ENCODE measurements at regions of chr5 and their contacts with region 1.

Region 1: GRCh38 chr5:157354800-157355199 is 88.9 kb downstream of the CYFIP2 start:
- DNase-seq: no peak
- H3K4me3 Mint-ChIP-seq: no peak overlapping the region
- H3K27ac Mint-ChIP-seq: no peak overlapping the region
- H3K4me1 Mint-ChIP-seq: peaks cover 53% of the 10 kb centered on the region
- H3K27me3 Mint-ChIP-seq: no peaks in the 10 kb centered on the region

Region 2: DNA sequence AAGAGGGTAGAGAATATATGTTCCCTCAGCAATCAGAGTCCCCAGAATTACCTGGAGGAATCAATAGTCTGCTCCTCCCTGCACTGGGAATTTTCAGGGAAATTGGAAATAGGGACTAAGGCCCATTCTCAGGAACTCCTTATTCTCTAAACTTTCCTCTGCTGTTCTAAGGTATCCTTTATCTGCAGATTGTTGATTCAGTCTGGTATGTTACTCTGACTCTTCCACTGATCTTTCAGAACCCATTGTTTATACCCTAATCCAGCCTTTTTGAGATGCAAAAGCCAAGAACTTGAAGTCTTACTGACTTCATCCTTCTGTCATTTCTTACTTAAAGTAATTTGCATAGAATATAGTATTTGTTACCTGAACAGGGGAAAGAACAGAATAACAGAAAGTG is 648.2 kb before region 1 on chr5:
- CTCF ChIA-PET with region 1: no interaction called
- POLR2A ChIA-PET with region 1: no interaction called
- intact Hi-C with region 1: no loop called
- DNase-seq: no peak
- H3K4me3 Mint-ChIP-seq: no peak overlapping the region
- H3K27ac Mint-ChIP-seq: no peak overlapping the region
- H3K4me1 Mint-ChIP-seq: no peaks in the 10 kb centered on the region
- H3K27me3 Mint-ChIP-seq: peaks cover 2% of the 10 kb centered on the region

Region 3: DNA sequence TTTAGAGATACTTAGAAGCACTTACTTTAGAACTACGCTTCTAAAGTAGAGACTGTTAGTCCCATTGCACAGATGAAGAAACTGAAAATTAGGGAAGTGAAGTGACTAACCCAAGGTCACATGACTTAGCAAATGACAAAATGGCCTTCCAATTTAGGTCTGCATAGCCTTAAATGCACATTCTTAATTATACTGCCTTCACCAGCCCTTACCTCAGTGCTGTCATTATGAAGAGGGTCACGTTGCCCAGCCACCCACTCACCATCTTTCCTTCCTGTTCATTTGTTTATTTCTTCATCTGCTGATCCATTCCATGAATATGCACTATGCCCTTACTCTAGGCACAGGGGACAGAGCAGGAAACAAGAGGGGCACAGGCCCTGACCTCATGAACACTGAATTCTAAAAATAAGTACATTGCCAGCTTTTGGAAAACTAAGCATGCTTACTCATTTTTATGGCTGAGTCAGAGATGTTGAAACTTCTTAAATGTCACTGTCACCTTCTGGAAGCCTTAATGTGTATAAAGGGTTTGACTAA is 254.6 kb before region 1 on chr5:
- CTCF ChIA-PET with region 1: no interaction called
- POLR2A ChIA-PET with region 1: no interaction called
- intact Hi-C with region 1: loop called (anchors 2 kb)
- DNase-seq: peak; percentile 69
- H3K4me3 Mint-ChIP-seq: peak overlapping the region; percentile 27
- H3K27ac Mint-ChIP-seq: peak overlapping the region; percentile 96
- H3K4me1 Mint-ChIP-seq: peaks cover 20% of the 10 kb centered on the region
- H3K27me3 Mint-ChIP-seq: no peaks in the 10 kb centered on the region

Region 4: DNA sequence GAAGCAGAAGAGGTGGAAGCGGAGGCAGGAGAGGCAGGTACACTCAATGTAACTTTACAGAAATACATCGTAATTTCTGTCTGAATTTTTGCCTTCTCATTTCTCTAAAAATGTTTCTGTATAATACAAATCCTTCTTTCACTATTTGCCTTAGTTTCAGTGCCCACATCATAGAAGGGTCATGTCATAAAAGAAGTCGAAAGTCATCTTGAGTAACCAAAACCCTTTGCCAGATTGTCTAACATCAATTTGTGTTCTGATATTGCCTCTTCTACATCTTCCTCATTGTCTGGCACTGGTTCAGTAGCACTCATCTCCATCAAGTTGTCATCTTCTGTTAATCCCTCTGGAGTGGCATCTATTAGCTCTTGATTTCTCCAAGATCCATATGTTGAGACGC is 95.1 kb before region 1 on chr5:
- CTCF ChIA-PET with region 1: no interaction called
- POLR2A ChIA-PET with region 1: no interaction called
- intact Hi-C with region 1: loop called (anchors 2 kb)
- DNase-seq: no peak
- H3K4me3 Mint-ChIP-seq: no peak overlapping the region
- H3K27ac Mint-ChIP-seq: no peak overlapping the region
- H3K4me1 Mint-ChIP-seq: peaks cover 76% of the 10 kb centered on the region
- H3K27me3 Mint-ChIP-seq: no peaks in the 10 kb centered on the region

Region 5: GRCh38 chr5:157390551-157391297 is 35.9 kb after region 1 on chr5:
- CTCF ChIA-PET with region 1: interaction called, 5 read pairs
- POLR2A ChIA-PET with region 1: interaction called, 13 read pairs
- intact Hi-C with region 1: loop called (anchors 1 kb)
- DNase-seq: peak; percentile 91
- H3K4me3 Mint-ChIP-seq: peak overlapping the region; percentile 49
- H3K27ac Mint-ChIP-seq: peak overlapping the region; percentile 98
- H3K4me1 Mint-ChIP-seq: peaks cover 39% of the 10 kb centered on the region
- H3K27me3 Mint-ChIP-seq: no peaks in the 10 kb centered on the region

Region 6: GRCh38 chr5:157502143-157502647 is 147.4 kb after region 1 on chr5:
- CTCF ChIA-PET with region 1: no interaction called
- POLR2A ChIA-PET with region 1: no interaction called
- intact Hi-C with region 1: no loop called
- DNase-seq: no peak
- H3K4me3 Mint-ChIP-seq: no peak overlapping the region
- H3K27ac Mint-ChIP-seq: no peak overlapping the region
- H3K4me1 Mint-ChIP-seq: peaks cover 18% of the 10 kb centered on the region
- H3K27me3 Mint-ChIP-seq: no peaks in the 10 kb centered on the region

Region 7: DNA sequence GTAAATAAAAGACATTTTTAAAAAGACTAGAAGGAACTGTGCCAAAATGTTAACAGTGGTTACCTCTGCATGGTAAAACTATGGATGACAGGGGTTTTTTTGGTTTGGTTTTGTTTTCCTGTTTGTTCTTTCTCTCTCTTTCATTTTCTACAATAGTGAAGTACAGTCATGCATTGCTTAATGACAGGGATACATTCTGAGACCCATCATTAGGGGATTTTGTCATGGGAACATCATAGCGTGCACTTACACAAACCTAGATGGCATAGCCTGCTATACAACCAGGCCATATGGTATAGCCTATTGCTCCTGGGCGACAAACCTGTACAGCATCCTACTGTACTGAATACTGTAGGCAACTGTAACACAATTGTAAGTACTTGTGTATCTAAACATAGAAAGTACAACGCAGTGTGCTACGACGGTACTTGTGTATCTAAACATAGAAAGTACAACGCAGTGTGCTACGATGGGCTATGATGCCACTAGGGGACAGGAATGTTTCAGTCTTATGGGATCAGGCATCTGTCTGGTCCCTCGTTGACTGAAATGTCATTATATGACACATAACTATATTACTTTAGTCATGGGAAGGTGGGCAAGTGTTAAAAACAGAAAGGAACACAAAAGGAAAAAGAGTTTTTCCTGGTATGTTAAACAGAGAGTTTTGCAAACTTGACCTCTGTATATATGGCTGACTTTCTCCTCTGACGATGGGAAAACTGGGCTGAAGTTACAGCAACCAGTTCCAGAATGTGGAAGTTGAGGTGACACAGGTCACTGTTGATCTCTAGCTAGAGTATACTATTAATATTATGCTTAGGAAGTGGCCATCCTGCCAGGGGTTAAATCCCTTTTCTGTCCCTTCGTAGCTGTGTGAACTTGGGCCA is 228.2 kb after region 1 on chr5:
- CTCF ChIA-PET with region 1: no interaction called
- POLR2A ChIA-PET with region 1: no interaction called
- intact Hi-C with region 1: loop called (anchors 5 kb)
- DNase-seq: no peak
- H3K4me3 Mint-ChIP-seq: no peak overlapping the region
- H3K27ac Mint-ChIP-seq: peak overlapping the region; percentile 72
- H3K4me1 Mint-ChIP-seq: peaks cover 50% of the 10 kb centered on the region
- H3K27me3 Mint-ChIP-seq: no peaks in the 10 kb centered on the region

Region 8: GRCh38 chr5:157858527-157859226 is 503.9 kb after region 1 on chr5 and contains the start of gene CLINT1:
- CTCF ChIA-PET with region 1: no interaction called
- POLR2A ChIA-PET with region 1: no interaction called
- intact Hi-C with region 1: loop called (anchors 5 kb)
- DNase-seq: peak; percentile 92
- H3K4me3 Mint-ChIP-seq: peak within 1 kb of the TSS; percentile 91
- H3K27ac Mint-ChIP-seq: peak within 1 kb of the TSS; percentile 96
- H3K4me1 Mint-ChIP-seq: peaks cover 73% of the 10 kb centered on the region
- H3K27me3 Mint-ChIP-seq: no peaks in the 10 kb centered on the region
- total RNA-seq, gene CLINT1: 48.7 to 49.4 TPM

Measured in activated CD4-positive, alpha-beta memory T cell treated with anti-CD3 and anti-CD28 coated beads for 36 hours (primary cell).